Esophagus squamous epithelium (tissue), 5 donors: ENCODE measurements at regions of chr6 and their contacts with region 1.

Region 1: DNA sequence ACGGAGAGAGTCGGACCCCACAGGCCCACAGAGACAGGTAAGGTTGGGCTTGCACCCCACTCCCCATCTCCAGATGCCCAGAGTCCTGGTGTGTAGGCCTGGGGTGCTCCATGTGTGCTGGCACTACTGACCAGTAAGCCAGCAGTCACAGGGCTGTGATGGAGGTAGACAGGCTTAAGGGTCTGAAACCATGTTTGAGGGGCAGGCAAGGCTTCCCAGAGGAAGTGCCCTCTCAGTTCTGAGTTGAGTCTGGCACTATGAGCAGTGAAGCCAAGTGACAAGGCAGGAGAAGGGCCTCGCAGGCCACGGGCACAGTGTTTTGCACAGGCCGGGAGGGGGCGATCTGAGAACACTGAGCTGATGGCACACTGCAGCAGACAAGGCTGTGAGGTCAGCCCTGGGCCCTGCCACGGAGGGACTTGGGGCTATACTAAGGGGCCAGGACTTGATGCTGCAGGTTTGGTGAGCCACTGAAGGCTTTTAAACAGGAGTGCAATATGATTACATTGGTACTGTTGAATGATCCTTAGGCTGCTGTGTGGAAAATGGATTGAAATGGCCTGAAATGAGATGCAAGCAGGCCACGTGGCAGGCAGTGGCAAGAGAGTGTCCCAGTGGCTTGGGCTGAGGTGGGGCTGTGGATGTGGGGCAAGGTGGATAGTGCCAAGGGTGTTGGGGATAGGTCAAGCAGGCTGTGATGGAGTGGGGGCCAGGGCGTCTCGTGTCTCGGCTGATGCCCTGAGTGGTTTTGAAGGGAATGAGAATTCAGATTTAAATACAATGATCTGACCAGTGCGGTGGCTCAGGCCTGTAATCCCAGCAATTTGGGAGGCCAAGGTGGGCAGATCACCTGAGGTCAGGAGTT is 20.3 kb downstream of the TTBK1 start:
- DNase-seq: peak; percentile 10
- H3K4me3 ChIP-seq: no peak overlapping the region
- H3K27ac ChIP-seq: no peak overlapping the region
- H3K4me1 ChIP-seq: peaks cover 0 to 12% (median under 1%) of the 10 kb centered on the region in 3 donors
- H3K27me3 ChIP-seq: peaks cover 0 to 14% (median 0%) of the 10 kb centered on the region in 4 donors
- CTCF ChIP-seq: peak; percentile 41 to 85 (median 73)
- POLR2A ChIP-seq: no peak

Region 2: DNA sequence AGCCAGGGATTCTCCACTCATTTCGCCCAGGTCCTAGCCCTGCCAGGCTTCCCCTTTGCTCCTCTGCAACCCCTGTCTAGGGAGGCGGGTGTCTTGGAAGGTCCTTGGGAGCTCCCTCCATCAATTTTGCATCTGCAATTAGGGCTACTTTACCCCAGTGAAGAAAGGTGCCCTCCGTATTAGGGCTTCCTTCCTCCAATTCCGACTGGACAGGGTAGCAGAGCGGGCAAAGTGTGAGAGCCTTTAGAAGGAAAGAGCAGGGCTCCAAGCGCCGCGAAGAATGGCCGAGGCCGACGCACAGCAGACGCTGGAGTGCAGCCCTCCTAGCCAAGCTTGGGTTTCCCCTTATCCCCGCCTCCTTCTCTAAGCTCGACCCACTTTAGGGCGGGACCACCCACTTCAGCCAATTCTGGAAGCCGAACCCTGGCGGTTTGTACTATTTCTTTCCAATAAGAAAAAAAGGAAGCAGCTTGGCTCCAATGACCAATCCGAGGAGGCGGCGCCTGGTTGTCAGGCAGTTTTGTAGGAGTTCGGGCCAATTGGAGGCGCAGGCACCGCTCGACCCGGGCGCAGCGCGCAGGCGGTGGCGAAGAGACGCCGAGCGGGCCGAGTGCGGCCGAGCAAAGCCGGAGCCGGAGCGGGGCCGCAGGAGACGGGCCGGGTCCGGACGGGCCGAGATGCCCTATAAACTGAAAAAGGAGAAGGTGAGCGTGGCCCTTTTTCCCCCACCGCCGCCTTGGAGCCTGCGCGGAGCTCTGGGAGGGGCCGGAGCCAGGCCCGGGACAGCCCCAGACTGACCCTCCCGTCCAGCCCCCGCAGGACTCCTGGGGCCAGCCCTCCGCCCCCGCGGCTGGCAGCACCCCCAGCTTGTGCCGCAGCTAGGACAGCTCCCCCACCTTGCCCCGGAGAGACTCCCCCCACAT is 279.3 kb before region 1 on chr6 and contains the start of gene PPP2R5D:
- intact Hi-C with region 1: no loop called
- DNase-seq: peak; percentile 93
- H3K4me3 ChIP-seq: peak within 1 kb of the TSS; percentile 63 to 99 (median 74)
- H3K27ac ChIP-seq: peak within 1 kb of the TSS; percentile 86 to 94 (median 88)
- H3K4me1 ChIP-seq: peaks cover 30 to 65% (median 34%) of the 10 kb centered on the region in 3 donors
- H3K27me3 ChIP-seq: no peaks in the 10 kb centered on the region
- CTCF ChIP-seq: peak in 3 of 6 experiments; percentile 10 to 24 (median 21)
- POLR2A ChIP-seq: peak in 1 of 4 donors; percentile 79
- total RNA-seq, gene PPP2R5D: 15.6 to 35.9 (median 27.4) TPM

Region 3: GRCh38 chr6:43506667-43507471 is 243.3 kb after region 1 on chr6:
- intact Hi-C with region 1: loop called (anchors 10 kb)
- DNase-seq: no peak
- H3K4me3 ChIP-seq: no peak overlapping the region
- H3K27ac ChIP-seq: peak overlapping the region in 2 of 4 donors; percentile 6 to 25
- H3K4me1 ChIP-seq: peaks cover 10 to 42% (median 19%) of the 10 kb centered on the region in 3 donors
- H3K27me3 ChIP-seq: peaks cover 0 to 29% (median 3%) of the 10 kb centered on the region in 4 donors
- CTCF ChIP-seq: peak; percentile 87 to 97 (median 94)
- POLR2A ChIP-seq: no peak

Region 4: DNA sequence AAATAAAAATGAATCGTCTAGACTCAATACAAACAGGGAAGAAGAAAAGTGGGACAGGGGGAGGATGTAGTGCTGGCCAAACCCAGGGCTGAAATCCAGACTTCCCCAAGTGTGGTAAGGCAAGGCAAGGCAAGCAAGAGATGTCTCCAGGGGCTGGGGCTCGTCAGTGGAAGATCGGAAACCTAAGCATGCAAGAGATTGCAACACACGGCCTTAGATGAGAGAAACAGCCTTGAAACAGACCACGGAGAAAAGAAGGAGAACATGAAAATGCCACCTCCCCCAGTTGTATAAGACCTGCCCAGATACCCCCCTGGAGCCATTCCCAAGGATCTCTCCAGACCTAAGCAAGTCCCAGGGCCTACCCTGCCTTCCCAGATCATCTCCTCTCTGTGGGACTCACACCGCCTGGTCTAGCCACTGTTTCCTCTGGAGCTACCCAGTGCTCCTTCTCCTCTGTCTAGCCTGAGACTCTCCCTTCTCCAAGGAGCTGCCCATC is 526.5 kb after region 1 on chr6:
- intact Hi-C with region 1: no loop called
- DNase-seq: no peak
- H3K4me3 ChIP-seq: no peak overlapping the region
- H3K27ac ChIP-seq: peak overlapping the region; percentile 24 to 77 (median 58)
- H3K4me1 ChIP-seq: peaks cover 0 to 3% (median 0%) of the 10 kb centered on the region in 3 donors
- H3K27me3 ChIP-seq: no peaks in the 10 kb centered on the region
- CTCF ChIP-seq: no peak
- POLR2A ChIP-seq: no peak